Activated T-helper 2 cell treated with anti-CD3 and anti-CD28 coated beads, Interferon-gamma antibody, Interleukin-2, Interleukin-4, amounts not matched to agents 10 μg/mL and 5 μg/mL and 100 μg/mL, durations not matched to agents 14 hours and 24 hours and 36 hours (primary cell): ENCODE measurements at regions of chr3 and their contacts with region 1.

Region 1: GRCh38 chr3:14508961-14509795 is 31.0 kb downstream of the GRIP2 start:
- DNase-seq: peak; percentile 49
- H3K4me3 Mint-ChIP-seq: no peak overlapping the region
- H3K27ac Mint-ChIP-seq: no peak overlapping the region
- H3K4me1 Mint-ChIP-seq: no peaks in the 10 kb centered on the region
- H3K27me3 Mint-ChIP-seq: no peaks in the 10 kb centered on the region

Region 2: DNA sequence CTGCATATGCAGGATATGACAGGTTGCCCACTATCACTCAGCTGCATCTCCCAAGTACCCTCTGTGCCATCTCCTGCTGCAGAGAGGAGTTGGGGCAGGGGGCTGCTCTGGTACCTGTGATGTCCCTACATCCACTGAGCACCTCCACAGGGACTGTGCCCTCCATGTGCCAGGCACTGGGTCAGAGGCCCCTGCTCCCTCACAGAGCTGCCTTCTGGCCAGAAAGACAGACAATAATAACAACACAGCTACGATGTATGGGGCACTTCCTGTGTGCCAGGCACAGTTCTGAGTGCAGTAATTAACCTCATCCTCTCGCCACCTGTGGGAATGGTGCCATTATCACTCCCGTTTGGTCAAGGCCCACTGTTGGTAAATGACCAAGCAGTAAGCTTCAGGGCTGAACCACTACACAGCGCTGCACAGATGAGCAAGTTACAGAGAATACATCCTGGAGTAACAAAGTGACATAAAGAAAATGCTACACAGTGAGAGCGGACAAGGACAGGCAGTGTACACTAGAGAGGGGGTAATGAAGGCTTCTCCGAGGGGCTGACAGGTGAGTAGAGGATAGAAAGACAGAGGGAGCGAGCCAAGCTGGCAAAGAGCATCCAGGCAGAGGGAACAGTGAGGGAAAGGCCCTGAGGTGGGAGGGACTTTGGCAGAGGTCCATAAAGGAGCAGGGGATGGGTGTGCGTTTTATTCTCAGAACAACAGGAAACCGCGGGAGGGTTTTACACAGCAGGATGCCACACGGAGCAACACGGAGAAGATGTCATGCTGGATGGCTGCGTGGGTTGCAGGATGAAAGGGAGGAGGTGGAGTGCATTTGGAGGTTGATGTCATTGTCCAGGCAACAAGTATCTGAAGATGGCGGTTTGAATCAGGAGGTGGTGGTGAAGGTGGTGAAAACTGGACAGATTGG is 642.9 kb before region 1 on chr3:
- intact Hi-C with region 1: no loop called
- DNase-seq: peak; percentile 39
- H3K4me3 Mint-ChIP-seq: peak overlapping the region; percentile 14
- H3K27ac Mint-ChIP-seq: peak overlapping the region; percentile 56
- H3K4me1 Mint-ChIP-seq: peaks cover 19% of the 10 kb centered on the region
- H3K27me3 Mint-ChIP-seq: no peaks in the 10 kb centered on the region

Region 3: GRCh38 chr3:14548321-14548729 is 39.1 kb after region 1 on chr3:
- intact Hi-C with region 1: loop called (anchors 2 kb)
- DNase-seq: no peak
- H3K4me3 Mint-ChIP-seq: no peak overlapping the region
- H3K27ac Mint-ChIP-seq: no peak overlapping the region
- H3K4me1 Mint-ChIP-seq: no peaks in the 10 kb centered on the region
- H3K27me3 Mint-ChIP-seq: peaks cover 16% of the 10 kb centered on the region

Region 4: GRCh38 chr3:14633819-14634424 is 124.7 kb after region 1 on chr3:
- intact Hi-C with region 1: no loop called
- DNase-seq: peak; percentile 32
- H3K4me3 Mint-ChIP-seq: no peak overlapping the region
- H3K27ac Mint-ChIP-seq: no peak overlapping the region
- H3K4me1 Mint-ChIP-seq: no peaks in the 10 kb centered on the region
- H3K27me3 Mint-ChIP-seq: peaks cover 16% of the 10 kb centered on the region

Region 5: GRCh38 chr3:14725013-14725412 is 215.8 kb after region 1 on chr3:
- intact Hi-C with region 1: no loop called
- DNase-seq: no peak
- H3K4me3 Mint-ChIP-seq: no peak overlapping the region
- H3K27ac Mint-ChIP-seq: no peak overlapping the region
- H3K4me1 Mint-ChIP-seq: no peaks in the 10 kb centered on the region
- H3K27me3 Mint-ChIP-seq: no peaks in the 10 kb centered on the region